Activated CD4-positive, alpha-beta T cell treated with anti-CD3 and anti-CD28 coated beads for 36 hours (primary cell): ENCODE measurements at regions of chr11 and their contacts with region 1.

Region 1: DNA sequence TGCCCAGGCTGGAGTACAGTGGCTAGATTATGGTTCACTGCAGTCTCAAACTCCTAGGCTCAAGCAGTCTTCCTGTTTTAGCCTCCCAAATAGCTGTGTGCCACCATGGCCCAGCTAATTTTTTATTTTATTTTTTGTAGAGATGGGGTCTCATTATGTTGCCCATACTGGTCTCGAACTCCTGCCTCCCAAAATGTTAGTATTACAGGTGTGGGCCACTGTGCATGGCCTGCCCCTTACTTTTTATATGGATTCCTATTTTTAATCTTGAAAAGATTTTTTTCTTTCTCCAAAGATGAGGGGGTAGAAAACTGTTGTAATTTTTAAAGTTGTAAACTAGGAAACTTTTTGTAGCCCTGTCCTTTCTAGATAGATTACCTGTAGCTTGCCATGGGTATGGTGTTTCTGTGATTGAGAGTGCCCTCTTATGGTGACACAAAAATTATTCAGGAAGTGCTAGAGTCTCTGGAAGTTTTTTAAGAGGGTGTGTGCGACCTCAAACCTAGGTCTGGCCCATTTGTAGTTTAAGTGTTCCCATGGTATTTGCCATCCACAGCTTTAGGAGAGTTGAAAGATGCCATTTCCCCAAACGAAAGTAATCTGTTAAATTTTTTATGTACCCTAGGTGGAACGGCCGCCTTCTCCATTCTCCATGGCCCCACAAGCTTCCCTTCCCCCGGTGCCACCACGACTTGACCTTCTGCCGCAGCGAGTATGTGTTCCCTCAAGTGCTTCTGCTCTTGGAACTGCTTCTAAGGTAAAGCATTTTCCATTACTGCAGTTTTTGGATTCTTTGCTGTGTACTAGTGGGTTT is 32.4 kb downstream of the MCAM start:
- DNase-seq: no peak
- ATAC-seq: peak; percentile 94
- H3K4me3 Mint-ChIP-seq: no peak overlapping the region
- H3K27ac Mint-ChIP-seq: peak overlapping the region; percentile 47
- H3K4me1 Mint-ChIP-seq: peaks cover 19% of the 10 kb centered on the region
- H3K27me3 Mint-ChIP-seq: no peaks in the 10 kb centered on the region

Region 2: GRCh38 chr11:119101759-119102423 is 182.7 kb before region 1 on chr11 and contains the start of gene DPAGT1:
- CTCF ChIA-PET with region 1: no interaction called
- POLR2A ChIA-PET with region 1: interaction called, 11 read pairs
- intact Hi-C with region 1: no loop called
- DNase-seq: peak; percentile 93
- ATAC-seq: peak; percentile 86
- H3K4me3 Mint-ChIP-seq: peak within 1 kb of the TSS; percentile 95
- H3K27ac Mint-ChIP-seq: peak within 1 kb of the TSS; percentile 100
- H3K4me1 Mint-ChIP-seq: peaks cover 42% of the 10 kb centered on the region
- H3K27me3 Mint-ChIP-seq: no peaks in the 10 kb centered on the region
- total RNA-seq, gene DPAGT1: 57.8 to 73.5 TPM

Region 3: GRCh38 chr11:119126675-119127268 is 157.8 kb before region 1 on chr11:
- CTCF ChIA-PET with region 1: no interaction called
- POLR2A ChIA-PET with region 1: no interaction called
- intact Hi-C with region 1: loop called in 1 of 2 experiments (anchors 5 kb)
- DNase-seq: no peak
- ATAC-seq: no peak
- H3K4me3 Mint-ChIP-seq: no peak overlapping the region
- H3K27ac Mint-ChIP-seq: peak overlapping the region; percentile 70
- H3K4me1 Mint-ChIP-seq: peaks cover 25% of the 10 kb centered on the region
- H3K27me3 Mint-ChIP-seq: no peaks in the 10 kb centered on the region

Region 4: GRCh38 chr11:119168471-119169281 is 115.9 kb before region 1 on chr11 and contains the start of gene NLRX1:
- CTCF ChIA-PET with region 1: interaction called, 8 read pairs
- POLR2A ChIA-PET with region 1: no interaction called
- intact Hi-C with region 1: loop called in 1 of 2 experiments (anchors 1 kb)
- DNase-seq: peak; percentile 93
- ATAC-seq: peak; percentile 94
- H3K4me3 Mint-ChIP-seq: peak within 1 kb of the TSS; percentile 88
- H3K27ac Mint-ChIP-seq: peak within 1 kb of the TSS; percentile 90
- H3K4me1 Mint-ChIP-seq: peaks cover 11% of the 10 kb centered on the region
- H3K27me3 Mint-ChIP-seq: no peaks in the 10 kb centered on the region
- total RNA-seq, gene NLRX1: 18.2 to 25.0 TPM

Region 5: GRCh38 chr11:119774172-119774763 is 489.7 kb after region 1 on chr11:
- CTCF ChIA-PET with region 1: no interaction called
- POLR2A ChIA-PET with region 1: no interaction called
- intact Hi-C with region 1: no loop called
- DNase-seq: peak; percentile 36
- ATAC-seq: no peak
- H3K4me3 Mint-ChIP-seq: no peak overlapping the region
- H3K27ac Mint-ChIP-seq: no peak overlapping the region
- H3K4me1 Mint-ChIP-seq: no peaks in the 10 kb centered on the region
- H3K27me3 Mint-ChIP-seq: peaks cover 10% of the 10 kb centered on the region